Activated CD4-positive, alpha-beta memory T cell treated with anti-CD3 and anti-CD28 coated beads for 36 hours (primary cell): ENCODE measurements at regions of chr2 and their contacts with region 1.

Region 1: DNA sequence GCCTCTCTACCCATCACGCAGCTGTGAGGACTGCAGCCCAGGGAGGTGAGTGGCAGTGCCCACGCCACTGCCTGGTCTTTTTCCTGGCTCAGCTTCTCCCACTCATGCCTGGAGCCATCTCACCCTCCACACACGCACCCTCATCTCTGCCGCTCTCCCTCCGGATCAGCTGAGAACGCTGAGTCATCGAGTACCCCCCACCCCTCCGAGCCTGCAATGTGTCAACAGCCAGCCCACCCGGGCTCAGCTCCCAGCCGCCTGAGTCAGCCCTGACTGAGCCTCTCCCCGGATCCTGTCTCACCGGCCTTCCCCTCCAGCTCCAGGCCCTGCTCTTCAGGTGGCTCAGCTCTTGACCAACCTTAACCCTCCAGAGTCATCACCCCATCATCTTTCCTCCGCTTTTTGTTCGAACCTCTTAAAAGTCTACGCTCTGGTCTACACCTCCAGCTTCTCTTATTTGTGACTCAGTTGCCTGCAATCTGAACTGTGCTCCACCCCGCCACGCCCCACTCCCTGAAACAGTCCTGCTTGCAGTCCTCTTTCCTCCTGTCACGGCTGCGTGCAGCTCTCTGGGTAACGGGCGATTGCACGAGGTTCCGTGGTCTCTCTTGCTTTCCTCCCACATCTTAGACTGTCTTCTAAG is 94.4 kb upstream of the ASAP2 start:
- DNase-seq: no peak
- H3K4me3 Mint-ChIP-seq: no peak overlapping the region
- H3K27ac Mint-ChIP-seq: no peak overlapping the region
- H3K4me1 Mint-ChIP-seq: no peaks in the 10 kb centered on the region
- H3K27me3 Mint-ChIP-seq: peaks cover 2% of the 10 kb centered on the region

Region 2: GRCh38 chr2:8693155-8693821 is 418.9 kb before region 1 on chr2:
- CTCF ChIA-PET with region 1: no interaction called
- POLR2A ChIA-PET with region 1: no interaction called
- intact Hi-C with region 1: loop called (anchors 5 kb)
- DNase-seq: peak; percentile 67
- H3K4me3 Mint-ChIP-seq: no peak overlapping the region
- H3K27ac Mint-ChIP-seq: no peak overlapping the region
- H3K4me1 Mint-ChIP-seq: peaks cover 3% of the 10 kb centered on the region
- H3K27me3 Mint-ChIP-seq: peaks cover 16% of the 10 kb centered on the region

Region 3: GRCh38 chr2:8893978-8894820 is 218.0 kb before region 1 on chr2:
- CTCF ChIA-PET with region 1: no interaction called
- POLR2A ChIA-PET with region 1: no interaction called
- intact Hi-C with region 1: no loop called
- DNase-seq: no peak
- H3K4me3 Mint-ChIP-seq: no peak overlapping the region
- H3K27ac Mint-ChIP-seq: no peak overlapping the region
- H3K4me1 Mint-ChIP-seq: no peaks in the 10 kb centered on the region
- H3K27me3 Mint-ChIP-seq: no peaks in the 10 kb centered on the region

Region 4: DNA sequence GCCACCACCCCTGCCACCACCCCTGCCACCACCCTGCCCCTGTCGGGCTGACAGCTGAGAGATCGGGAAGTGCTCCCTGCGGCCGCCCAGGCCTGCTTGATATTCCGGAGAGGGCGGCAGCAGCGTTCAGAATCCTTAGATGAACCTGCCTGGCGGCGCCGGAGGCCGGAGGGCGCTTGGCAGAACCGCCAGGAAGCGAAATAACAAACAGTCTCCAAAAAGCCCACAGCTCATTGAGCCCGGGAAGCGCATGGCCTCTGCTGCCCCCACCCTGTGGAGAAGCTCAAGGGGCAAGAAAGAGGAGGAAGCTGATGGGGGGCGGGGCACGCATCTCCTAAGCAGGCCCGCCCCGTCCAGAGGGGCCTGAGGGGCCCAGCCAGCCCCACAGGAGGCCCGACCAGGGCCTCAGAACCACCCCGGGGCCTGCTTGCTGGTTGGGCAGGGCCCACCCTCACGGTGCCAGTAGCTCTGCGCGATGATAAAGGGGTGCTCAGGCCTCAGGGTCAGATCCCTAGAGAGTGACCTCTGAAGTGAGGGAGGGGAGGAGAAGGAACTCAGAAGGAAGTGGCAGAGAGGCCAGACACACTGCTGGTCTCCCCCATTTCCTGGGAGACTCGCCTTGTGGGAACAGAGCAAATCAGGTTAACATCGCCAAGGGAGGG is 16.4 kb before region 1 on chr2:
- CTCF ChIA-PET with region 1: no interaction called
- POLR2A ChIA-PET with region 1: no interaction called
- intact Hi-C with region 1: no loop called
- DNase-seq: no peak
- H3K4me3 Mint-ChIP-seq: no peak overlapping the region
- H3K27ac Mint-ChIP-seq: no peak overlapping the region
- H3K4me1 Mint-ChIP-seq: no peaks in the 10 kb centered on the region
- H3K27me3 Mint-ChIP-seq: peaks cover 30% of the 10 kb centered on the region